ENCODE measurements at regions of chr10 and their contacts with region 1.

Region 1: DNA sequence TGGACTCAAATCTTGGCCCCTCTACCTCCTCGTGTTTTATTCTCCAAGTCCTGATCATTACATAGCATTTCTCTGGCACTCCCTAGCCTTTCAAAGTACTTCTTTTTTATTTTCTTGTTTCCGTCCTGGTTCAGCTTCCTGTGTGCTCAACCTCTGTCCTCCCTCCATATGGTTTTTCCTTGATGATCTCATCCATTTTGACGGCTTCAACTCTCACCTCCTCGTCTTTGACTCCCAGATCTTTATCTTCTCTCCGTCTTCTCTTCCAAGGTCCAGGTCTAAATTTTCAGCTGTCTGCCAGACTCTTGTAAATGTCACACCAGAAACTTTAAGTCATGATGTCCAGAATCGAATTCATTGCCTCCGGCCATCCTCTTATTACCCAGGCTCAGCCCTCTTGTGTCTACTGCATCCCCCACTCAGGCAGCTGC is 23.3 kb upstream of the GFRA1 start:
- DNase-seq: no peak
- ATAC-seq: no peak
- H3K4me3 ChIP-seq: no peak overlapping the region
- H3K27ac ChIP-seq: no peak overlapping the region
- H3K4me1 ChIP-seq: no peaks in the 10 kb centered on the region
- H3K27me3 ChIP-seq: no peaks in the 10 kb centered on the region

Region 2: DNA sequence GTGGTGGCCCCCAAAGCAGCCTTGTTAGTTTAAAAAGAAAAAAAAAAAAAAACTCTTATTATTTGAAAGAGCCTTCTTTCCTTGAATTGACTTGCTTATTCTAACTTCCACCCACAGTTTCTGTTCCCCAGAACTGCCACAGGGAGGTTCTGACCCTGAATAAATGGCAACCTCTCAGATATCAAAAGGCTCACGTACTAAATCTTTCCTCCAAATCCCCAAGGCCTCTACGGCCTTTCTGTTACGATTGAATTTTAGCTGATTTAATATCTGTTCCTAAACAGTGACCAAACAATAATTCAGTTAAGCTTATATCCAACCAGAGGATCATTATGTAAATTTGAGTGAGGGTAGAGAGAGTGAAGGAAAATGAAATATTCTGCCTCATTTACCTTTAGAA is 506.1 kb before region 1 on chr10:
- intact Hi-C with region 1: loop called in 2 of 4 experiments (anchors 10 kb)
- DNase-seq: no peak
- ATAC-seq: no peak
- H3K4me3 ChIP-seq: no peak overlapping the region
- H3K27ac ChIP-seq: no peak overlapping the region
- H3K4me1 ChIP-seq: no peaks in the 10 kb centered on the region
- H3K27me3 ChIP-seq: no peaks in the 10 kb centered on the region

Region 3: GRCh38 chr10:116444527-116445142 is 148.3 kb after region 1 on chr10:
- intact Hi-C with region 1: no loop called
- DNase-seq: no peak
- ATAC-seq: no peak
- H3K4me3 ChIP-seq: no peak overlapping the region
- H3K27ac ChIP-seq: no peak overlapping the region
- H3K4me1 ChIP-seq: no peaks in the 10 kb centered on the region
- H3K27me3 ChIP-seq: no peaks in the 10 kb centered on the region